PC-3 (cell line): ENCODE measurements at regions of chr10 and their contacts with region 1.

Region 1: GRCh38 chr10:63465293-63466143 is at the start of gene JMJD1C:
- DNase-seq: peak; percentile 97
- ATAC-seq: peak; percentile 67
- H3K4me3 ChIP-seq: peak within 1 kb of the TSS; percentile 83
- H3K27ac ChIP-seq: peak within 1 kb of the TSS; percentile 69
- H3K4me1 ChIP-seq: peaks cover 26% of the 10 kb centered on the region
- H3K27me3 ChIP-seq: no peaks in the 10 kb centered on the region
- CTCF ChIP-seq: peak; percentile 34
- total RNA-seq, gene JMJD1C: 121 and 139 TPM in 2 replicates

Region 2: DNA sequence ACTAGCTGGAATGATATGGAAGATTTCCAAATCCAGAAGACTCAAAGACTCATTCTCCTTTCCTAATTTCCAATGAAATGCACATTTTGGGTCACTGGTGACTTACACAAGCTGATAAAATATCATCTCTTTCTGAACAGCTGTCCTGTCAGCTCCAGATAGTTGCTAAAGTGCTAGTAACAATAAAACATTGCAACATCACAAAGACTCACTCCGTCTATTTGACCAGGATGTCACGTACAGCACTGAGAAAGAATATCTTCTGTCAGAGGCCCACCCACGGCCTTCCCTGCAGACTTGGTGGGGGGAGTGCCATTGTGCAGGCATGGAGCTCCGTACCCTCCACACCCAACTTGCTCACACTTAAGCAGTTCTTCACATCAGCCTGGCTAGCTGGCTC is 570.5 kb before region 1 on chr10:
- CTCF ChIA-PET with region 1: no interaction called
- POLR2A ChIA-PET with region 1: no interaction called
- intact Hi-C with region 1: no loop called
- DNase-seq: peak; percentile 45
- ATAC-seq: no peak
- H3K4me3 ChIP-seq: no peak overlapping the region
- H3K27ac ChIP-seq: no peak overlapping the region
- H3K4me1 ChIP-seq: peaks cover 14% of the 10 kb centered on the region
- H3K27me3 ChIP-seq: no peaks in the 10 kb centered on the region
- CTCF ChIP-seq: no peak

Region 3: DNA sequence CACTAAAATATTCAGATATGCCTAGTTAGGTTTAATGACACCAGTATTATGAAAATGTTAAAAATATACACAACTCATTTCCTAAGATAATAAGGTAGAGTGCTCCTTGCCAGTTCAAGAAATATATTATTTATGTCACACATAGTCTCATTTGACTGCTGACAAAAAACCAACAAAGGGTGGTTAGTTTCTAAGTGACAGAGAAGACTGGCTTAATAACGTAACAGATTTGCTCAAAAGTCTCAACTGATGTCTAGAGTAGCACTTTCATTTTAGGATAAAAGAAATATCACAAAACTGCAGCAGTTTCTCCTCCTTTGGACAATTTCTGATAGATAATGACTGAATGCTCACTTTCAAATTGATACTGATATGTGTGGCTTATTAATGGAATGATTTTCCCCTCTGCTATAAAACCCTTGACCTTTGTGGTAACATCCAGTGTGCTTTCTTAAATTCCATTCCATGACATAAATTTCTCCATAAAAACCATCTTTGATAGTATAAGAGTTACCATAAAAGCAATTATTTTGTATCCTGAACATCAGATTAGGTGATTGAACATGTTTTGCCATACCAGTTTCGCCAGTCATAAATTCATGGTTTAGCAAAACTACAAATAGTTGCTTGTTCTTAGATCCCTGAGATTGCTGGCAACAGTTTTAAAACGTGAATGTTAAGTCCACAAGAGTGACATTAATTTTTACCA is 238.2 kb before region 1 on chr10:
- CTCF ChIA-PET with region 1: no interaction called
- POLR2A ChIA-PET with region 1: no interaction called
- intact Hi-C with region 1: no loop called
- DNase-seq: peak; percentile 92
- ATAC-seq: peak; percentile 47
- H3K4me3 ChIP-seq: 0 out of 2 replicates have a peak overlapping the region, but pooled peaks have one; percentile 0
- H3K27ac ChIP-seq: peak overlapping the region; percentile 38
- H3K4me1 ChIP-seq: peaks cover 36% of the 10 kb centered on the region
- H3K27me3 ChIP-seq: no peaks in the 10 kb centered on the region
- CTCF ChIP-seq: no peak

Region 4: DNA sequence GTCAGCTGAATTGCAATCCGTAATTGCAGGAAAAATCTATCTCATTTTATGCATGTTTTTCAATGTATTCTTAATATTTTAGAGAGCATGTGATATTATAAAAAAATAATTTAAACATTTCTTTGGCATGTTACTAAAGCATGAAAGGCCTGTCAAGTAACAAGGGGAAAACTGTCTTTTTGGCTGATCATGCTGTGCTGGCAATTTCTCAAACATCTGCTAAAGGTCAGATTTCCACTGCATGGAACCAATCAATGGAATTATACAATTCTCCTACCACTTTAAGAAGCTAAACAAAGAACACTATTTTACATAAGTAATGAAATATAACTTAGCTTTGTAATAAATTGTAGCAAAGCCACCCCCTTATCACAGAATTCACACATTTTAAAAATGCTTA is 49.1 kb before region 1 on chr10:
- CTCF ChIA-PET with region 1: no interaction called
- POLR2A ChIA-PET with region 1: interaction called, 62 read pairs
- intact Hi-C with region 1: loop called (anchors 1 kb)
- DNase-seq: no peak
- ATAC-seq: no peak
- H3K4me3 ChIP-seq: no peak overlapping the region
- H3K27ac ChIP-seq: no peak overlapping the region
- H3K4me1 ChIP-seq: peaks cover 43% of the 10 kb centered on the region
- H3K27me3 ChIP-seq: no peaks in the 10 kb centered on the region
- CTCF ChIP-seq: no peak

Region 5: GRCh38 chr10:63521416-63522276 is 56.1 kb after region 1 on chr10:
- CTCF ChIA-PET with region 1: no interaction called
- POLR2A ChIA-PET with region 1: interaction called, 3 read pairs
- intact Hi-C with region 1: loop called (anchors 1 kb)
- DNase-seq: peak; percentile 94
- ATAC-seq: peak; percentile 58
- H3K4me3 ChIP-seq: peak overlapping the region; percentile 75
- H3K27ac ChIP-seq: peak overlapping the region; percentile 85
- H3K4me1 ChIP-seq: peaks cover 65% of the 10 kb centered on the region
- H3K27me3 ChIP-seq: no peaks in the 10 kb centered on the region
- CTCF ChIP-seq: no peak

Region 6: GRCh38 chr10:63720072-63720537 is 254.6 kb after region 1 on chr10:
- CTCF ChIA-PET with region 1: no interaction called
- POLR2A ChIA-PET with region 1: interaction called, 4 read pairs
- intact Hi-C with region 1: loop called (anchors 2 kb)
- DNase-seq: peak; percentile 97
- ATAC-seq: peak; percentile 53
- H3K4me3 ChIP-seq: no peak overlapping the region
- H3K27ac ChIP-seq: no peak overlapping the region
- H3K4me1 ChIP-seq: peaks cover 29% of the 10 kb centered on the region
- H3K27me3 ChIP-seq: no peaks in the 10 kb centered on the region
- CTCF ChIP-seq: peak; percentile 100